ENCODE measurements at regions of chr12 and their contacts with region 1.

Region 1: GRCh38 chr12:121240484-121241101 is 30.7 kb downstream of the P2RX4 start:
- DNase-seq: peak; percentile 78 to 99 (median 96)
- ATAC-seq: peak; percentile 95
- H3K4me3 ChIP-seq: peak overlapping the region; percentile 71
- H3K4me3 Mint-ChIP-seq: peak overlapping the region; percentile 81 to 94 (median 88)
- H3K27ac ChIP-seq: peak overlapping the region; percentile 87
- H3K27ac Mint-ChIP-seq: peak overlapping the region; percentile 90 to 100 (median 99)
- H3K4me1 ChIP-seq: peaks cover 30 to 44% of the 10 kb centered on the region in 2 donors
- H3K4me1 Mint-ChIP-seq: peaks cover 26 to 57% (median 47%) of the 10 kb centered on the region in 7 donors
- H3K27me3 ChIP-seq: no peaks in the 10 kb centered on the region
- H3K27me3 Mint-ChIP-seq: no peaks in the 10 kb centered on the region

Region 2: DNA sequence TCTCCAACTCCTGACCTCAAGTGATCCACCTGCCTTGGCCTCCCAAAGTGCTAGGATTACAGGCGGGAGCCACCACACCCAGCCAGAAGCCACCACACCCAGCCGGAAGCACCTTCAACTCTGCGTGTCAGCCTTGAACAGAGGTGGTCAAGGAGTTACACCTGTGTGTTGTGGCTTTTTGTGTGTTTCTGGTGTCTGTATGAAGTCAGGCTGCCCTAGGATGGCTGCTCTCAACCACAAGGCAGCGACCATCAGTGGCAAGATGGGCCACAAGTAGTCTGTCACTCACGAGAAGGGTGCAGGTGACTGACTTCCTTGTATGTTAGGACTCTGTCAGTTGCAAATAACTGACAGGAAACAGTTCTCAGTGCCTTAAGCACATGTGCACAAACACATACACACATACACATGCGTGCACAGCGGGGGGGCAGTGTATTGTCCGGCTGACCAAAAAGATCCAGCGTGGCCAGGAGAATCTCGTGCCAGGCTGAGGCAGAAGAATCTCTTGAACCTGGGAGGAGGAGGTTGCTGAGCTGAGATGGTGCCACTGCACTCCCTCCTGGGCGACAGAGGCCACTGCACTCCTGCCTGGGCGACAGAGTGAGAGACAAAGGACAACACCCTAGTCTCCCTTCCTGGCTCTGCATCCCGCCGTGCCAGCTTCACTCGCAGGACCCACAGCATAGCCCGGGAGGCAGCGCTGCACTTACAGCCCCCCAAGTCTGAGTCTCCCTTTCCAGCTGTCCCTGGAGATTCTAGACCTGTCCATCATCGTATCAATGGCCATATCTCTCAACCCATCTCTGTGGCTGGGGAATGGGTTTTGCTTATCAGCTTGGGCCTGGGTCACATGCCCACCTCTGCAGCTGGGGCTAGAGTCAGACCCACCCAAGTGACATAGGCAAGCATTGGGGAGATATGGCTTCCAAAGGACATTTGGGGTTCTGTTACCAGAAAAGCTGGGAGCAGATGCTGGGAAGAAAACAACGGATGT is 17.0 kb before region 1 on chr12:
- CTCF ChIA-PET with region 1: interaction called, 8 read pairs
- POLR2A ChIA-PET with region 1: interaction called, 49 read pairs
- intact Hi-C with region 1: loop called (anchors 1 to 2 kb)
- DNase-seq: peak in 8 of 9 donors; percentile 21 to 56 (median 48)
- ATAC-seq: peak; percentile 68
- H3K4me3 ChIP-seq: peak overlapping the region; percentile 28
- H3K4me3 Mint-ChIP-seq: peak overlapping the region; percentile 48 to 91 (median 72)
- H3K27ac ChIP-seq: peak overlapping the region; percentile 56
- H3K27ac Mint-ChIP-seq: peak overlapping the region; percentile 92 to 98 (median 95)
- H3K4me1 ChIP-seq: peaks cover 16 to 48% of the 10 kb centered on the region in 2 donors
- H3K4me1 Mint-ChIP-seq: peaks cover 23 to 57% (median 49%) of the 10 kb centered on the region in 7 donors
- H3K27me3 ChIP-seq: no peaks in the 10 kb centered on the region
- H3K27me3 Mint-ChIP-seq: no peaks in the 10 kb centered on the region

Region 3: DNA sequence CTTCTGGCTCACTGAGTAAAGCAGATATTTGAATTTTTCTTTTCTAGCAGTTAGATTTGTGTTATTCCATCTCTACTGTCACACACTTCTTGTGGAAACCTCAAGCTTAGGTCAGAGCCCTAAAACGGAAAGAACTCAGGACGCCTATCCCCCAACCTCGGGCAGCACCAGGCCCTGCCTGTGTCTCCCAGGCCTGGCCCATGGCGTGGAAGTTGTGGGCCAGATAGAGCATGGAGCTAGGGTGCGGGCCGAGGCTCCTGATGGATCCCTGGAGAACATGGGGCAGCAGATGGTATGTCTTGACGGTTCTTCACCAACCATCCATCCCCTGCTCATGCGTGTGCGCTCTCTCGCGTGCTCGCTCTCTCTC is 10.1 kb before region 1 on chr12:
- CTCF ChIA-PET with region 1: interaction called, 22 read pairs
- POLR2A ChIA-PET with region 1: interaction called, 49 read pairs
- intact Hi-C with region 1: loop called in 1 of 2 experiments (anchors 2 kb)
- DNase-seq: no peak
- ATAC-seq: no peak
- H3K4me3 ChIP-seq: no peak overlapping the region
- H3K4me3 Mint-ChIP-seq: no peak overlapping the region
- H3K27ac ChIP-seq: no peak overlapping the region
- H3K27ac Mint-ChIP-seq: peak overlapping the region in 3 of 9 donors; percentile 8 to 65 (median 53)
- H3K4me1 ChIP-seq: peaks cover 0 to 21% of the 10 kb centered on the region in 2 donors
- H3K4me1 Mint-ChIP-seq: peaks cover 4 to 39% (median 29%) of the 10 kb centered on the region in 7 donors
- H3K27me3 ChIP-seq: no peaks in the 10 kb centered on the region
- H3K27me3 Mint-ChIP-seq: no peaks in the 10 kb centered on the region

Measured in naive thymus-derived CD4-positive, alpha-beta T cell (primary cell).